CD4-positive, alpha-beta T cell (primary cell): ENCODE measurements at regions of chr1 and their contacts with region 1.

Region 1: DNA sequence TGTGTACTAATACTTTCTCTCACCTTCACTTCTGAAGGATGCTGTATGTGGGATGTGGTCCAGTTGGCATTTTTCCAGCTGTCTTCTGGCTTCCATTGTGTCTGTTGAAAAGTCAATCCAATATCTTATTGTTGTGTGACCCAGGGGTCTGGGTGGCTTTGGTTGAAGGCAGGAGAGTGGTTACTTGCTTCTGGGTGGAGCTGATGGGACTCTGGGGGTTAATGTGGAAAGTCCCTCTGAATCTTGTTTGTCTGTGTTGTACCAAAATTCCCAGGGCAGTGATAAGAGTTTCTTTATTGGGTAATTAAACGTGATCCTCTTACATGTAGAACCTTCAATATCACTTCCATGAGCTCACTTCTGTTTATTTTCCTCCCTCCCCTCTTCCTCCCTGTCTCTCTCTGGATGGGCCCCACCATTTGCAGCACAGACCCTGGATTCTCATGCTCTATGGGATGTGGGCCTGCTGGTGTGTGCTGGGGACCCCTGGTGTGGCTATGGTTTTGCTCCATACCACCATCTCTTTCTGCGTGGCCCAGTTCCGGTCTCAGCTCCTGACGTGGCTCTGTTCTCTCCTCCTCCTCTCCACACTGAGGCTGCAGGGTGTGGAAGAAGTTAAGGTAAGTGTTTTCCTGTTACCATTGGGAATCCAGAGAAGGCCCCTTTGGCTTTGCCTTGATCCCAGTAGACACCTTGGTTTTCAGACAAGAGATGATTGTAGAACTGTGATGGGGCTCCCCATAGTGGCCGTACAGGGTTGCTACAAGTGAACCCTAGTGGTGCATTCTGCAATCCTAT is 71.5 kb downstream of the HHAT start:
- DNase-seq: peak; percentile 3 to 64 (median 22)
- ATAC-seq: peak; percentile 76
- H3K4me3 ChIP-seq: no peak overlapping the region
- H3K4me3 Mint-ChIP-seq: no peak overlapping the region
- H3K27ac ChIP-seq: no peak overlapping the region
- H3K27ac Mint-ChIP-seq: no peak overlapping the region
- H3K4me1 ChIP-seq: peaks cover 12% of the 10 kb centered on the region
- H3K4me1 Mint-ChIP-seq: peaks cover 14% of the 10 kb centered on the region
- H3K27me3 ChIP-seq: no peaks in the 10 kb centered on the region
- H3K27me3 Mint-ChIP-seq: no peaks in the 10 kb centered on the region
- CTCF ChIP-seq: peak; percentile 57

Region 2: DNA sequence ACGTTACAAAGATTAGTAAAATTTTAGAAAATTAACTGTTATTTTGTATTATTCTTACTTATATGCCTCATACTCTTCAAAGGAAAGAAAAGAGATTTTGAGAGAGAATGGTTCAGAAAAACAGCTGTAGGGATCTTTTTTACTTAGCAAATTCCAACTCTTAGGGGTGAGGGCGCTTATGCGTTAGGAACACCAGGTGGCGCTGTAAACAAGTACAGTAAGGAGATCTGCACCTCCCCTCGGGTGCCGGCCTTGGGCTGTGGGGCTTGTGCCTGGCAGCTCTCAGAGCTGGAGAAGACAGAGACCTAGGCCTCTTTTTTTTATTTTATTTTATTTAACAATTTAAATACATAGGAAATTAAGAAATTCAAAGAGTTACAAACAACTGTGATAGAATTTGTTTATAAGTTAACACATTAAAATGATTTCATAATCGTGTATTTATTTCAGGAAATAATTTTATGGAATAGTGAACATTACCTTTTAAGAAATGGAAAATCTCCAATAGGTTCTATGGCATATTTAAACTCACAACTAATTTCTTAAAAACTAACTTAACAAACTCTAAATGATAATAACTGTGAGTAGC is 539.9 kb before region 1 on chr1:
- CTCF ChIA-PET with region 1: no interaction called
- POLR2A ChIA-PET with region 1: no interaction called
- intact Hi-C with region 1: loop called (anchors 2 to 10 kb)
- DNase-seq: peak; percentile 50 to 86 (median 60)
- ATAC-seq: peak; percentile 81
- H3K4me3 ChIP-seq: no peak overlapping the region
- H3K4me3 Mint-ChIP-seq: no peak overlapping the region
- H3K27ac ChIP-seq: no peak overlapping the region
- H3K27ac Mint-ChIP-seq: no peak overlapping the region
- H3K4me1 ChIP-seq: no peaks in the 10 kb centered on the region
- H3K4me1 Mint-ChIP-seq: no peaks in the 10 kb centered on the region
- H3K27me3 ChIP-seq: peaks cover 4 to 7% of the 10 kb centered on the region in 2 experiments
- H3K27me3 Mint-ChIP-seq: peaks cover 27% of the 10 kb centered on the region
- CTCF ChIP-seq: peak; percentile 97

Region 3: GRCh38 chr1:210301615-210302000 is 98.6 kb before region 1 on chr1:
- CTCF ChIA-PET with region 1: no interaction called
- POLR2A ChIA-PET with region 1: no interaction called
- intact Hi-C with region 1: loop called in 1 of 2 experiments (anchors 5 kb)
- DNase-seq: no peak
- ATAC-seq: no peak
- H3K4me3 ChIP-seq: no peak overlapping the region
- H3K4me3 Mint-ChIP-seq: no peak overlapping the region
- H3K27ac ChIP-seq: no peak overlapping the region
- H3K27ac Mint-ChIP-seq: no peak overlapping the region
- H3K4me1 ChIP-seq: no peaks in the 10 kb centered on the region
- H3K4me1 Mint-ChIP-seq: no peaks in the 10 kb centered on the region
- H3K27me3 ChIP-seq: peaks cover 0 to 5% of the 10 kb centered on the region in 2 experiments
- H3K27me3 Mint-ChIP-seq: peaks cover 28% of the 10 kb centered on the region
- CTCF ChIP-seq: no peak

Region 4: DNA sequence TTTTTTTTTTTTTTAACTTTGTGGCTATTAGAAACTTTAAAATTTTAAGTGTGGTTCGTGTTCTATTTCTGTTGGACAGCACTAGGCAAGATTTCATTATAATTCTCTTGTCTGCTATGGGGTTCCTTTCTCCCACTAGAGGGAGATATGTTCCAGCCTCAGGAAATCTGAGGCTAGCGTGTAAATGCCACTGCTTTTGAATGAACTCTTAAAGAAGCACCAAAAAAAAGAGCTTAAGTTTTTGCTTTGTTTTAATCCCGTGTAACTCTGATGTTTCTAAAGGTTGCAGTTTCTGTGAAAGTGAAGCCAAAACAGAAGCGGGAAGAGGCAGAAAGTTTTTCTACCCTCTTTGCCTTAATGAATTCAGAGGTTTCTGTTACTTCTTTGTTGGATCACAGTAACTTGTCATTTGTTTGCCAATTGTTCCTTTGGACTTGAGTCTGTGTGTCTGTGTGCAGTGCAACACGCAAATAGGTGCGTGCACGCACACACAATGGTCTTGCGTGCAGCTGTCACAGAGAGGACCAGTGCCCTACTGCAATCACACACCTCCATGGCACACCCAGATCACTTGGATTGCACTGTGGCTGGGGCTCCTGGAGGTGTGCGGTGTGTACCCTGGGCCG is 39.3 kb before region 1 on chr1:
- CTCF ChIA-PET with region 1: interaction called, 4 read pairs
- POLR2A ChIA-PET with region 1: no interaction called
- intact Hi-C with region 1: loop called (anchors 1 to 2 kb)
- DNase-seq: peak in 3 of 14 experiments; percentile 42 to 49 (median 44)
- ATAC-seq: no peak
- H3K4me3 ChIP-seq: no peak overlapping the region
- H3K4me3 Mint-ChIP-seq: no peak overlapping the region
- H3K27ac ChIP-seq: no peak overlapping the region
- H3K27ac Mint-ChIP-seq: no peak overlapping the region
- H3K4me1 ChIP-seq: no peaks in the 10 kb centered on the region
- H3K4me1 Mint-ChIP-seq: no peaks in the 10 kb centered on the region
- H3K27me3 ChIP-seq: no peaks in the 10 kb centered on the region
- H3K27me3 Mint-ChIP-seq: no peaks in the 10 kb centered on the region
- CTCF ChIP-seq: peak; percentile 60

Region 5: DNA sequence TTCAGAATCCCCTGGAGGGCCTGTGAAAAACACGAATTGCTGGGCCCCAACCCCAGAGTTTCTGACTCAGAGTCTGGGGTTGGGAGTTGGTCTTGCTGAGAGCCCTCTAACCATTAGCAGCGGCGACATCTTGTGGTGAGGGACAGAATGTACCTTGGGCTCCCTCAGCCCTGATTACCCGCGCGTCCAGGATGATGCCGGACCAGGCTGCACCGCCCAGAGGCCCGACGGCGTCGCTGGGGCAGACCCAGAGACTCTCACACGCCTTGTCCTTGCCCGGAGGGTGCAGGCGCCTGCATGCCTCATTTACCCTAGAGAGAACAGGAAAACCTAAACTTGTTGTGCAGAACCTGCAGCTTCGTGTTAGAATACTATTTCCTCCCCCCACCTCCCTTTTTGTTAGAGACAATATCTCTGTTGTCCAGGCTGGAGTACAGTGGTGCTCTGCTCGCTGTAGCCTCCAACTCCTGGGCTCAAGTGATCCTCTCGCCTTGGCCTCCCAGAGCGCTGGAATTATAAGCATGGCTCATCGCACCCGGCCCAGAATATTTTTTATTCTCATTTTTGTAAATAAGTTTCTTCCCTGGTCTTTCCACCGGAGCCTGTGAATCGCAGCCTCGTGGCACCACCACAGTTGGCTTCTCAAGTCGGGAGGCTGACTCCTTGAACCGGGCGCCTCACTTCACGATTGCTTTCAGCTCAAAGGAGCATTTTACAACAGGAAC is 1114.0 kb after region 1 on chr1:
- CTCF ChIA-PET with region 1: no interaction called
- POLR2A ChIA-PET with region 1: no interaction called
- intact Hi-C with region 1: loop called (anchors 10 kb)
- DNase-seq: peak; percentile 47 to 81 (median 61)
- ATAC-seq: peak; percentile 60
- H3K4me3 ChIP-seq: no peak overlapping the region
- H3K4me3 Mint-ChIP-seq: peak overlapping the region; percentile 82
- H3K27ac ChIP-seq: no peak overlapping the region
- H3K27ac Mint-ChIP-seq: no peak overlapping the region
- H3K4me1 ChIP-seq: peaks cover 20% of the 10 kb centered on the region
- H3K4me1 Mint-ChIP-seq: peaks cover 22% of the 10 kb centered on the region
- H3K27me3 ChIP-seq: no peaks in the 10 kb centered on the region
- H3K27me3 Mint-ChIP-seq: no peaks in the 10 kb centered on the region
- CTCF ChIP-seq: peak; percentile 69